ENCODE measurements at regions of chr15 and their contacts with region 1.

Region 1: DNA sequence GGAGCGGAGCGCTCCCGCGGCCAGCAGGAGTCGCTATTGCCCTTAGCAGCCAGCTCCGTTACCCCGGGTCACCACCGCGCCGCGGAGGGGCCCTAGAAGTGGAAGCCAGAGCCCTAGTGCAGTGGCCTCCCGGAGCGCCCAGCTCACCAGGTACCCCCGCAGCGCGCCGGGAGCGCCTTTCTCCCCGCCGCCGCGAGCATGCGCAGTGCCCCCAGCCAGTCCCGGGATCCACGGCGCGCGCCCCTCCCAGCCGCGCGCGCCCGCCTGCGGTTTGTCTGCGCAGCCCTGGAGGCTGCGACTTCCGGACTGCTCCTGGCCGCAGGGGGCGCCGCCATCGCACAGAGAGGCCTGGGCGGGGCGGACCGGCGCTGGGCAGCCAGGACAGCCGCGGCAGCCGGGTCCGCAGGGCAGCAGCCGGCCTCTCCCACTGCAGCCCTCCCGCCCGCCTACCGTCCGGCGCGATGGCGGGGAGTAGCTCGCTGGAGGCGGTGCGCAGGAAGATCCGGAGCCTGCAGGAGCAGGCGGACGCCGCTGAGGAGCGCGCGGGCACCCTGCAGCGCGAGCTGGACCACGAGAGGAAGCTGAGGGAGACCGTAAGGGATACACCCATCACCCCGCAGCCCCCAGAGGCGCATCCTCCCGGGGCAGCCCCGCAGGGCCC is 5.7 kb downstream of the TPM1 start:
- DNase-seq: peak; percentile 93 to 96 (median 94)
- H3K4me3 ChIP-seq: peak overlapping the region; percentile 56 to 92 (median 88)
- H3K27ac ChIP-seq: peak overlapping the region; percentile 10 to 94 (median 81)
- H3K4me1 ChIP-seq: peaks cover 43 to 56% of the 10 kb centered on the region in 2 donors
- H3K27me3 ChIP-seq: no peaks in the 10 kb centered on the region
- CTCF ChIP-seq: peak; percentile 77 to 97 (median 94)
- POLR2A ChIP-seq: peak; percentile 68 to 85

Region 2: DNA sequence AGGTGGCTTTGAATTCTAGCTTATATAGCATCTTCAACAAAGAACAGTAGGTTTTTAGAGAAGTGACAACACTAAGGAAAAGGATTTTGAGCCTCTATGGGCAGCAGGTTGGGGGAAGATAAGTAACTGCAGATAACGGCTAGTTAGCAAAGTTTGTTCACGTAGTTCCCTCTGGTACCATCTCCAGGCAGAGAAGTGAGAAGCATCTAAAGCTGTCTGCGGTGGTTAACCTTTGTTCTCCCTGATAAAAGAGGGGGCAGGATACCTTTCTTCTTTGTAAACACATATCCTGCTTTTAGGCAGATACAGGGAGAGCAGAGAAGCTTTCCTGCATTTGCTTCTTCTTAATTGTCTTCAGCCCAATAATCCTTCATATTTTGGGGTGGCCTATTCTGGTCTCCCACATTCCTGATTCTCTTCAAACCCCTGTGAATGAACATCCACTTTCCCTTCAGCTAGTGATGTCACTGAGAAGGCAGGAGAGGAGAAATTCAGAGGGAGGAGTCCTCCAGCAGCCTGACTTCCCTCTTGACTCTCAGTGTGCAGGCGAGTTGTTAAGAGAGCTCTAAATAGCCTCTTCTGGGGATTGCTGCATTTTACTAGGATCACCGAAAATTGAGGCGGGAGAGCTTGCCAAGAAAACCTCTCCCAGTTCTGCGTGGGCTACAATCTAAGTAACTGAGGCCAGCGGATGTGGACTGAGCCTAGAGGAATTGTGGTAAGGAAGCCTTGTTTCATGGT is 489.4 kb before region 1 on chr15:
- intact Hi-C with region 1: no loop called
- DNase-seq: peak in 4 of 7 donors; percentile 18 to 57 (median 31)
- H3K4me3 ChIP-seq: no peak overlapping the region
- H3K27ac ChIP-seq: peak overlapping the region in 2 of 5 donors; percentile 39 to 50
- H3K4me1 ChIP-seq: no peaks in the 10 kb centered on the region
- H3K27me3 ChIP-seq: no peaks in the 10 kb centered on the region
- CTCF ChIP-seq: no peak
- POLR2A ChIP-seq: no peak

Region 3: DNA sequence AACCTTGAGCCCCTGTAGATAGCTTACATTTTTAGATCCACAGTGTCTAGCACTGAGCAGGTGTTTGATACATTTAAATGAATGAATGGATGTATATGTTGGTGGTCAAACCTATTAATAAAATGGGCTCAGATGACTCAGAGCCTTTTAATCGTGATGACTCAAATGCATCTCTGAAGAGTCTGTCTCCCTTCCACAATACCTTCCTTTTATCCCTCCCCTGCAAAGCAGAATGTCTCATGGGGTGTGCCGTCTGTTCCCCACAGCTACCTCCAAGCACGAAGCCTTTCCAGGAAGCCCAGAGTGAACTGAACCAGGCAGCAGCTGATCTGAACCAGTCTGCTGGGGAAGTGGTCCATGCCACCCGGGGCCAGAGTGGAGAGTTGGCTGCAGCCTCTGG is 309.2 kb before region 1 on chr15:
- intact Hi-C with region 1: no loop called
- DNase-seq: no peak
- H3K4me3 ChIP-seq: no peak overlapping the region
- H3K27ac ChIP-seq: no peak overlapping the region
- H3K4me1 ChIP-seq: peaks cover 0 to 4% of the 10 kb centered on the region in 2 donors
- H3K27me3 ChIP-seq: no peaks in the 10 kb centered on the region
- CTCF ChIP-seq: no peak
- POLR2A ChIP-seq: no peak

Region 4: GRCh38 chr15:62782039-62782791 is 266.0 kb before region 1 on chr15:
- intact Hi-C with region 1: loop called (anchors 5 to 10 kb)
- DNase-seq: peak; percentile 54 to 89 (median 73)
- H3K4me3 ChIP-seq: no peak overlapping the region
- H3K27ac ChIP-seq: peak overlapping the region in 2 of 5 donors; percentile 22 to 41
- H3K4me1 ChIP-seq: peaks cover 7 to 18% of the 10 kb centered on the region in 2 donors
- H3K27me3 ChIP-seq: no peaks in the 10 kb centered on the region
- CTCF ChIP-seq: peak; percentile 51 to 82 (median 70)
- POLR2A ChIP-seq: no peak

Region 5: GRCh38 chr15:63079938-63080626 is 31.8 kb after region 1 on chr15:
- intact Hi-C with region 1: loop called in 1 of 2 experiments (anchors 5 kb)
- DNase-seq: peak; percentile 61 to 83 (median 79)
- H3K4me3 ChIP-seq: no peak overlapping the region
- H3K27ac ChIP-seq: peak overlapping the region in 2 of 5 donors; percentile 15 to 42
- H3K4me1 ChIP-seq: peaks cover 13 to 18% of the 10 kb centered on the region in 2 donors
- H3K27me3 ChIP-seq: no peaks in the 10 kb centered on the region
- CTCF ChIP-seq: no peak
- POLR2A ChIP-seq: no peak

Region 6: GRCh38 chr15:63093486-63094205 is 45.4 kb after region 1 on chr15:
- intact Hi-C with region 1: loop called in 1 of 2 experiments (anchors 5 kb)
- DNase-seq: peak; percentile 78 to 94 (median 86)
- H3K4me3 ChIP-seq: no peak overlapping the region
- H3K27ac ChIP-seq: no peak overlapping the region
- H3K4me1 ChIP-seq: peaks cover 0 to 5% of the 10 kb centered on the region in 2 donors
- H3K27me3 ChIP-seq: no peaks in the 10 kb centered on the region
- CTCF ChIP-seq: peak; percentile 61 to 95 (median 93)
- POLR2A ChIP-seq: no peak

Measured in adrenal gland (tissue), 19 donors.